ENCODE measurements at regions of chr1 and their contacts with region 1.

Region 1: GRCh38 chr1:117059678-117060440 is at the start of gene TTF2:
- DNase-seq: peak; percentile 98
- ATAC-seq: peak; percentile 94
- H3K4me3 Mint-ChIP-seq: no peak within 1 kb of the TSS
- H3K27ac Mint-ChIP-seq: no peak within 1 kb of the TSS
- H3K4me1 Mint-ChIP-seq: peaks cover 41% of the 10 kb centered on the region
- H3K27me3 Mint-ChIP-seq: no peaks in the 10 kb centered on the region
- total RNA-seq, gene TTF2: 99.7 to 108 TPM

Region 2: DNA sequence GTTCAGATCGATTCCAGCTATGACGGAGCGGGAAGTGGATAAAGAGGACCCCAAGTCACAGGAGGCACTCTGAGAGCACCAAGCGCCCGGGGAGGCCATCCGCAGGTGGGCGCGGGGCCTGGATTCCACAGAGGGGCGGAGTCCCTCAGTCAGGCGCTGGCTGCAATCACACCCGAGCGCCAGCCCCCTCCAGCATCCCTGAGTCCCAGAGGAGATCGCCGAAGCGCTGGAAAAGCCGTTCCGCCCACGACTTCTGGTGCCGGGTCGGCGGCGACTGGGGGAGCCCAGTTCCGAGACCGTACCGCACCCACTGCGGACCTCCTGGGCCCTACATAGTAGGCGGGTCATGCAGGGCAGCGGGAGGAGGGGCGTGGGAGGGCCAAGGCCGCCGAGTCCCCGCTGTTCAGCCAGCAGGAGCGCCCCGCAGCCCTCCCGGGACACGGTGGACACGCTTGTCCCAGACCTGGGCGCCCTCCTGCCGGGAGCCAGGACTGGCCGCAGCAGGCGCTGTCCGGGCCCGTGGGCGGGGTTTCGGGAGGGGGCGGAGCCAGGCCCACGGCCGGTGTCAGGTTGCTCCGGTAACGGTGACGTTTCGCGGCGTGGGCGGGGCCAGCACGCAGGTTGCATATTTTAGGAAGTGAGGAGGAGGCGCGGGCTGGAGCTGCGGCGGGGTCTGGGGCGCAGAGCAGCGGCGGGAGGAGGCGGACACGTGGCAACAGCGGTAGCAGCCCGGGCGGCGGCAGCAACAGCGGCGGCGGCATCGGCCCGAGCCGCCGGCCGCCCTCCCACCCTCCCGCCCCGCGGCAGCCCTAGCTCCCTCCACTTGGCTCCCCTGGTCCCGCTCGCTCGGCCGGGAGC is 687.0 kb before region 1 on chr1 and contains the start of gene ATP1A1:
- CTCF ChIA-PET with region 1: no interaction called
- POLR2A ChIA-PET with region 1: no interaction called
- intact Hi-C with region 1: loop called (anchors 1 to 2 kb)
- DNase-seq: peak; percentile 99
- ATAC-seq: peak; percentile 55
- H3K4me3 Mint-ChIP-seq: peak within 1 kb of the TSS; percentile 93
- H3K27ac Mint-ChIP-seq: peak within 1 kb of the TSS; percentile 98
- H3K4me1 Mint-ChIP-seq: peaks cover 33% of the 10 kb centered on the region
- H3K27me3 Mint-ChIP-seq: no peaks in the 10 kb centered on the region
- total RNA-seq, gene ATP1A1: 247 to 257 TPM

Region 3: GRCh38 chr1:116667575-116668105 is 392.2 kb before region 1 on chr1 and contains the start of gene IGSF3:
- CTCF ChIA-PET with region 1: interaction called, 3 read pairs
- POLR2A ChIA-PET with region 1: no interaction called
- intact Hi-C with region 1: loop called in 1 of 2 experiments (anchors 1 kb)
- DNase-seq: peak; percentile 76
- ATAC-seq: peak; percentile 92
- H3K4me3 Mint-ChIP-seq: peak within 1 kb of the TSS; percentile 69
- H3K27ac Mint-ChIP-seq: no peak within 1 kb of the TSS
- H3K4me1 Mint-ChIP-seq: peaks cover 10% of the 10 kb centered on the region
- H3K27me3 Mint-ChIP-seq: peaks cover 39% of the 10 kb centered on the region
- total RNA-seq, gene IGSF3: 3.8 to 4.1 TPM

Region 4: DNA sequence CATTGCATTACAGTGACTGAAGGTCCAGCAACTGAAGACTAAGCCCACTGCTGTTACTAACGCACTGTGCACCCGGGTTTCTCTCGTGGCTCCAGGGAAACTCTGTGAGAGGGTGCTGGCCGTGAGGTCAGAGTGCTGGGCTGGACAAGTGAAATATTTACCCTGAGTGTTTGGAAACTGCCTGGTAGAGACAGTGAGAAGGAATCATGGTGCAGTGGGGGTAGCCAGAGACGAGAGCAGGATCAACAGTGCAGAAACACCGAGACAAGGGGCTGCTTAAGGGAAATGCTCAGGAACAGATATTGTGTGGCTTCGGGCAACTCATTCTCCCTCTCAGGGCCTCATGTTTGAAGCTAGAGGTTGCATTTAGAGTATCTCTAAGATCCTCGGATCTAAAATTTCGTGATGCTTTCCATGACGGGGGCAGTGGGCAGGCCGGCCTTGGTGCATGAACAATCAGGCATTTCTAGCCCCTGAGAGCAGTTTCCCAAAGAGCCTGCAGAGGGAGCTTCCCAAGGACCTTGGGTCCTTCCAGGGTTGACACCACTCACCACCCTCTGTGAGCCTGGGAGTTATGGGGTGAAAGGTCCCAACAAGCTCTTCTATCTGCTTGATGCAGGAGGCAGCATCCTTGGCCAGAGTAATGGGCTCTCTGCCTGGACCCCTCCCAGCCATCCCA is 295.9 kb before region 1 on chr1:
- CTCF ChIA-PET with region 1: interaction called, 21 read pairs
- POLR2A ChIA-PET with region 1: interaction called, 80 read pairs
- intact Hi-C with region 1: loop called in 1 of 2 experiments (anchors 2 kb)
- DNase-seq: peak; percentile 83
- ATAC-seq: peak; percentile 6
- H3K4me3 Mint-ChIP-seq: peak overlapping the region; percentile 93
- H3K27ac Mint-ChIP-seq: peak overlapping the region; percentile 100
- H3K4me1 Mint-ChIP-seq: peaks cover 92% of the 10 kb centered on the region
- H3K27me3 Mint-ChIP-seq: no peaks in the 10 kb centered on the region

Region 5: GRCh38 chr1:116853670-116854402 is 206.0 kb before region 1 on chr1:
- CTCF ChIA-PET with region 1: interaction called, 4 read pairs
- POLR2A ChIA-PET with region 1: no interaction called
- intact Hi-C with region 1: loop called in 1 of 2 experiments (anchors 10 kb)
- DNase-seq: peak; percentile 23
- ATAC-seq: peak; percentile 85
- H3K4me3 Mint-ChIP-seq: no peak overlapping the region
- H3K27ac Mint-ChIP-seq: peak overlapping the region; percentile 75
- H3K4me1 Mint-ChIP-seq: peaks cover 31% of the 10 kb centered on the region
- H3K27me3 Mint-ChIP-seq: peaks cover 2% of the 10 kb centered on the region

Region 6: DNA sequence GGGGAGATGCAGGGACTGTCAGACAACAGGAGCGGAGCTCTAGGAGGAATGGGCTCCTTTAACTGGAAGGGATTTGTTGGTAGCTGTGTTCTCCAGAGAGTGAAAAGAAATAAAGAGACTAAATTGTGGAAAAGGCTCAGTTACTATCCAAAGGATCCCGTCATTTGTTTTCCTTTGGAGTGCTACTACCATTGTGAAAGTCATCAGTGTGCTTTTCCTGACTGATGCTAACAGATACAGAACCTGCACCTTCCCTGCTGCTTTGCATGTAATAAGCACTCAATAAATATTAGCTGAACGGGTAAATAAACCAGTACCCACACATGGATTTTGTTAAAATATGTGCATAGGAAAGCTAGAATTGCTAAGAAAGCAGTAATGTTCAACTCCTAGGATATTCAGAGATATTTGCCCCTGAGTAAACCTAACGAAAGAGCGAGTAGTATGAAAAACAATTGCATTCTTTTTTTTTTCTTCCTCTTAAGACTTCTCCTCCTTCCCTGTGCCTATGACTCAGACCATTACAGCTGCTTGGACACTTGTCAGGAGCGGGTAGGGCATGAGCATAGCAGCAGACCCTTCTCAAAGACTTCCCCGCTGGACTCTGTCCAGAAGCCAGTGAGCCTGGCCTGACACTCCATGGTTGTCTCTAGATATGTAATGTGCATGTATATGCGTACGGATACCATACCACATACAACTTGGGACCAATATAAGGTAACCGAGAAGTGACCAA is 108.5 kb before region 1 on chr1:
- CTCF ChIA-PET with region 1: no interaction called
- POLR2A ChIA-PET with region 1: no interaction called
- intact Hi-C with region 1: no loop called
- DNase-seq: no peak
- ATAC-seq: no peak
- H3K4me3 Mint-ChIP-seq: no peak overlapping the region
- H3K27ac Mint-ChIP-seq: no peak overlapping the region
- H3K4me1 Mint-ChIP-seq: no peaks in the 10 kb centered on the region
- H3K27me3 Mint-ChIP-seq: no peaks in the 10 kb centered on the region

Region 7: GRCh38 chr1:117009132-117009531 is 50.7 kb before region 1 on chr1:
- CTCF ChIA-PET with region 1: no interaction called
- POLR2A ChIA-PET with region 1: interaction called, 5 read pairs
- intact Hi-C with region 1: loop called in 1 of 2 experiments (anchors 2 kb)
- DNase-seq: peak; percentile 25
- ATAC-seq: peak; percentile 53
- H3K4me3 Mint-ChIP-seq: no peak overlapping the region
- H3K27ac Mint-ChIP-seq: peak overlapping the region; percentile 14
- H3K4me1 Mint-ChIP-seq: peaks cover 54% of the 10 kb centered on the region
- H3K27me3 Mint-ChIP-seq: peaks cover 3% of the 10 kb centered on the region

Region 8: GRCh38 chr1:117128323-117129079 is 68.6 kb after region 1 on chr1:
- CTCF ChIA-PET with region 1: interaction called, 10 read pairs
- POLR2A ChIA-PET with region 1: no interaction called
- intact Hi-C with region 1: loop called in 1 of 2 experiments (anchors 2 kb)
- DNase-seq: no peak
- ATAC-seq: peak; percentile 44
- H3K4me3 Mint-ChIP-seq: no peak overlapping the region
- H3K27ac Mint-ChIP-seq: no peak overlapping the region
- H3K4me1 Mint-ChIP-seq: no peaks in the 10 kb centered on the region
- H3K27me3 Mint-ChIP-seq: peaks cover 9% of the 10 kb centered on the region

Measured in activated CD4-positive, alpha-beta T cell treated with anti-CD3 and anti-CD28 coated beads for 36 hours (primary cell).